ENCODE measurements at regions of chr16 and their contacts with region 1.

Region 1: DNA sequence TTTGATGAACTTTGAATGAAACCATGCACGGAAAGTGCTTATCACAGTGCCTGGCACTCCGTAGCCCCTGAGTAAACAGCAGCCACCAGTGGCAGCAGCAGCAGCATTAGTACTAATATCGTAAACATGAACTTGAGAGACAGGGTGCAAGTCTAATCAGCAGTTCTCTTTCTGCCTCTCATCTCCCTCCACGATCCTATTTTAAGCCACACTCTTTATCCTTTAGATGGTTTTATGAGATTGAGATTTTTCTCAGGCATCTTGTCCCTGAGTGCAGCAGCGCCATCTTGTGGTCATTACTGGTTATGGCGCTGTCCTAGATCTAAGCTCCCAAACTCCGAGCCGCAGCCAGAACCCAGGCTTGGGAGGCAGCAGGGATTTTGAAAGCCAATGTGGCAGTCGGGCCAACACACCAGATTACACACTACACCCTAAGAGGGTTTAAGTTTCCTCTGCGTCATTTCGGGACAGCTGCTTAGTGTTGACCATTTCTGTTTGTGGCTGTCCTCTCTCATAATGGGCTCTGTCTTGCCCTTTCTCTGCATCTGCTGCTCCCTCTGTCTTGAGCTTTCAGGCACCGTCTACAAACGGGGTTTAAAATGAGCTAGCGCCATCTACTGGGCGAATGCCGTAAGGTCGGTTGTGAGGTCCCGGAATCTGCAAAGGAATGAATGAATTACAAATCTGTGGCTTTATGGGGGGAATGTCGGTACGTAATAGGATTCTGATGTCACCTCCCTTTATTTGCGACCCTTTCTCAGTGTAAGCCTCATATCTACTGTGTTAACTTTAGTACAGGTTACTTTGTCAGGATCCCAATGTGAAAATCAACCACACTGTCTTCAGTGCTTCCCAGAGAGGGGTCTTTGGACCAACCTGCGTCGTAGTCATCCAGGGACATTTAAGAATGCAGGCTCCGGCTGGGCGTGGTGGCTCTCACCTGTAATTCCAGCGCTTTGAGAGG is 64.5 kb downstream of the CYLD start:
- DNase-seq: peak; percentile 85
- CTCF ChIP-seq: peak; percentile 96

Region 2: GRCh38 chr16:50210266-50211038 is 595.9 kb before region 1 on chr16:
- CTCF ChIA-PET with region 1: interaction called, 38 read pairs
- POLR2A ChIA-PET with region 1: no interaction called
- DNase-seq: peak; percentile 70
- CTCF ChIP-seq: peak; percentile 79

Region 3: DNA sequence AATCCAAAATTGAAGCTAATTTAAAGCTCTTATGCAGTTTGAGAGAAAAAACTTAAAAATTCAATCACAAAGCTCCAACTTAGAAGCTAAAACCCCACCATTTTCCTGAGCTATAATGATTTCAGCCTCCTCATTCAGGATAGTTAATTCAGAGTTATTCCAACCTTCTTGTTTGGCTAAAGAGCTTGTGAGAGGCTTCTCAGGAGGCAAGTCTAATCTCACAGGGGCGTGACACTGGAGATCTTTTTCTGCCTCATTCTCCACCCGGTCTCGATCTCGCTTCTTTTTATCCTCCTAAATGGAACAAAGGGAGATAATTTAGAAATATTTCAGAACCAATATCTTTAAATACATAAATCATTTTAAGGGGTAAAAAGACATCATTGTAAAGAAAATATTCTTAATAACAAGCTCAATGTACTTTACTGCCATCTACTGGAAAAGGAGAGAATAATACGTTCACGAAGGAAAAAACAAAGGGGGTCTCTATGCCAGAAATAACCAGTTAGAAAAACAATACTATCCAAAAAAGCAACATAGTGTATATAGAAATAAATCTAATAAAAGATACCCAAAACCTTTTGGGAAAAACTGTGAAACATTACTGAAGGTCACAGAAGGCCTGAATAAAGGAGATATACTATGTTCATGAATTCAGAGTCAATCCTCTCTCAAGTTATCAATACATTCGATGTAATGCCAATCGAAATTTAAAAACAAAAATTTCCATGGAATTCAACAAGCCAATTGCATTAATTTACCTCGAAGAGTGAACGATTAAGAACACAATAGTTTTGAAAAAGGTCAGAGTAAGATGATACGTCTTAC is 451.5 kb before region 1 on chr16:
- CTCF ChIA-PET with region 1: interaction called, 39 read pairs
- POLR2A ChIA-PET with region 1: no interaction called
- DNase-seq: no peak
- CTCF ChIP-seq: peak; percentile 40

Region 4: GRCh38 chr16:50559804-50560514 is 246.4 kb before region 1 on chr16:
- CTCF ChIA-PET with region 1: interaction called, 12 read pairs
- POLR2A ChIA-PET with region 1: no interaction called
- DNase-seq: no peak
- CTCF ChIP-seq: no peak

Region 5: GRCh38 chr16:50696575-50697420 is 109.6 kb before region 1 on chr16:
- CTCF ChIA-PET with region 1: interaction called, 20 read pairs
- POLR2A ChIA-PET with region 1: no interaction called
- DNase-seq: peak; percentile 85
- CTCF ChIP-seq: no peak

Region 6: GRCh38 chr16:50776037-50776436 is 30.3 kb before region 1 on chr16:
- CTCF ChIA-PET with region 1: interaction called, 21 read pairs
- POLR2A ChIA-PET with region 1: no interaction called
- DNase-seq: no peak
- CTCF ChIP-seq: no peak

Measured in GM10248 (cell line).